Vagina (tissue), 2 donors: ENCODE measurements at regions of chr16 and their contacts with region 1.

Region 1: DNA sequence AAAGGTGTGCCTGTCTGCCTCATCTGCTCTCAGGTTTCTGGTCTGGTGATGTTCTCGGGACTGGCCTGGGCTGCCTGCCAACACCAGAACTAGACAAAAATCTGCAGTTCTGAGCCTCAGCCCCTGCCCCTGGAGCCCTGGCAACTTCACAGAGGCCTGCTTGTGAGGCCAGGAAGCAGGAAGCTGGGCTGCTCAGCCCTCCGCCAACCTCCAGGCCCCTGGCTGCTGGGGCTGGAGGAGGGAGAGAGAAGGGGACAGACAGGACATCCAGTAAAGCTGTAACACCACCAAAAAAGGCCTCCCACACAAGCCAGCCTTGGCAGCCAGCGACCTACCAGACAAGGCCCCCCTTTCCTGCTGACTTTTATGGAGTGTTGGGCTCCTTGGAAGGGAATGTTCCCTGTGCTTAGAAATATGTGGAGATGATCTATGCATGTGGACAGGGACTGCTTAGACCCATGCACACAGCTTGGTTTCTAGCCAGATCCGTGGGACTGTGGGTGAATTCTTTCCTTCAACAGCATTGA is 157.6 kb downstream of the XYLT1 start:
- DNase-seq: peak in 1 of 2 donors; percentile 93
- H3K4me3 ChIP-seq: no peak overlapping the region
- H3K27ac ChIP-seq: peak overlapping the region; percentile 86
- H3K4me1 ChIP-seq: peaks cover 37% of the 10 kb centered on the region
- H3K27me3 ChIP-seq: no peaks in the 10 kb centered on the region
- CTCF ChIP-seq: no peak
- POLR2A ChIP-seq: no peak

Region 2: GRCh38 chr16:17224879-17225281 is 88.3 kb before region 1 on chr16:
- intact Hi-C with region 1: loop called (anchors 10 kb)
- DNase-seq: no peak
- H3K4me3 ChIP-seq: no peak overlapping the region
- H3K27ac ChIP-seq: peak overlapping the region; percentile 45
- H3K4me1 ChIP-seq: peaks cover 21% of the 10 kb centered on the region
- H3K27me3 ChIP-seq: no peaks in the 10 kb centered on the region
- CTCF ChIP-seq: no peak
- POLR2A ChIP-seq: no peak